Activated CD8-positive, alpha-beta memory T cell treated with anti-CD3 and anti-CD28 coated beads, Interleukin-2, amount 10 ng/mL, durations not matched to agents 7 days and 5 days (primary cell): ENCODE measurements at regions of chr2 and their contacts with region 1.

Region 1: GRCh38 chr2:88857951-88858411 is 166.5 kb downstream of the RPIA start:
- DNase-seq: no peak
- ATAC-seq: no peak
- H3K4me3 Mint-ChIP-seq: no peak overlapping the region
- H3K27ac Mint-ChIP-seq: no peak overlapping the region
- H3K4me1 Mint-ChIP-seq: peaks cover 4% of the 10 kb centered on the region
- H3K27me3 Mint-ChIP-seq: peaks cover 30% of the 10 kb centered on the region

Region 2: DNA sequence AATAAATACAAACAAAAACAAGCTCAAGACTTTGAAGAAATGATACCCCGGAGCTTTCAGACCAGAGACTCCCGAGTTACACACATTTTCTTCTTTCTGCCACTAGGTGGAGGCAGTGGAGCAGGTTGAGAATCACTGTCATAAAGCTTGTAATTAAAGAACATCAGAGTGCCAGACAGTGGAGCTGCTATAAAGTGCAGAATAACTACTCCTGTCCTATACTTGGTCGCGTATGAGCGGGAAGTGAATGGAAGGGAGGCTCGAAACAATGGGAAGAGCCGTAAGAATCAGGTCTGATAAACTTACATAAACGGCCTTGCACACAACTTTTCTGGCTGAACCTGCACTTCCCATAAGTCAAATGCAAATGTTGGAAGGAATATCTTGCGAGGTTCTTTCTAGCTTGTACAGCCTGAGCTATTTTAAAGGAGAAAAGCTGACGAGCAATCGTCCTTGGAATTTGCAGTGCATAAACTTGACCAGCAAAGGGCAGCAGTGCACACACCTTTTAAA is 22.5 kb after region 1 on chr2:
- CTCF ChIA-PET with region 1: interaction called, 19 read pairs
- DNase-seq: peak; percentile 56
- ATAC-seq: peak; percentile 65
- H3K4me3 Mint-ChIP-seq: no peak overlapping the region
- H3K27ac Mint-ChIP-seq: no peak overlapping the region
- H3K4me1 Mint-ChIP-seq: no peaks in the 10 kb centered on the region
- H3K27me3 Mint-ChIP-seq: peaks cover 52% of the 10 kb centered on the region